HEK293 (cell line): ENCODE measurements at regions of chr17 and their contacts with region 1.

Region 1: DNA sequence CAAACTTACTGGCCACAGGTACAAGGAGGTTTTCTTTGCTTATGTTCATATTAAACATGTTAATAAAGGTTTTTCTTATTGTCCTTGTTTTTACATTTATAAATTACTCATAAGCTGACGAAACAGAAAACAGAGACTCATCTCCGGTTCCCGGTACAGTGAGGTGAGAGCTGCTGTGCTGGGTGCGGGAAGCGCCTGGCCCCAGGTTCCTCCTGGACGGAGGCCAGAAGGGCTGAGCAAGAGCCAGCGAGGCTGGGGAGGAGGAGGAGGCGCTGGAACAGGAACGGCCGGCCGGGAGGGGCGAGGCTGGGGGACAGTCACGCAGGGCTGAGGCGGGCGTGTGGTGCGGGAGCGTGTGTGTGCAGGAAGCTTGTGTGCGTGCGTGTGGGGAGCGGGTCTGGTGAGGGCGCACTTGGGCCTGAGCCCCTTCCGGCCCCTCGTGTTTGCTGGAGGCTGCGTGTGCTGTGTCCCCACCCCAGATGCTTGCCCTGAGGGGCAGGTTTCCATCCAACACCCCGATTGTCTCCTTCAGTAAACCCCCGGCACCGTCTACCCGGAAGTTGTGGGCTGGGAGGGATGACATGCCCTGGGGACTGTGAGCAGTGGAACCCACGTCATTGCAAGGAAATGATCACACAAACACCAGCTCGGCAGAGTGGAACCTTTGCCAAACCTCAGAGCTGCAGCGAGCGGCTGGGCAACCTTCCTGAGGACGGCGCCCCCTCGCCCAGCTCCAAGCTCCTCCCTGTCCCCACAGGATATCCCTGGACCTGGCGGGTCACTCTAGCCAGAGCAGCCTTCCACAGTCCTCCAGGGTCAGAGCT is 19.5 kb downstream of the CD7 start:
- H3K4me3 ChIP-seq: peak overlapping the region; percentile 27
- H3K27ac ChIP-seq: peak overlapping the region; percentile 55; the same call in 1 of the 2 replicates
- H3K4me1 ChIP-seq: peaks cover 13% of the 10 kb centered on the region
- CTCF ChIP-seq: peak; percentile 46

Region 2: DNA sequence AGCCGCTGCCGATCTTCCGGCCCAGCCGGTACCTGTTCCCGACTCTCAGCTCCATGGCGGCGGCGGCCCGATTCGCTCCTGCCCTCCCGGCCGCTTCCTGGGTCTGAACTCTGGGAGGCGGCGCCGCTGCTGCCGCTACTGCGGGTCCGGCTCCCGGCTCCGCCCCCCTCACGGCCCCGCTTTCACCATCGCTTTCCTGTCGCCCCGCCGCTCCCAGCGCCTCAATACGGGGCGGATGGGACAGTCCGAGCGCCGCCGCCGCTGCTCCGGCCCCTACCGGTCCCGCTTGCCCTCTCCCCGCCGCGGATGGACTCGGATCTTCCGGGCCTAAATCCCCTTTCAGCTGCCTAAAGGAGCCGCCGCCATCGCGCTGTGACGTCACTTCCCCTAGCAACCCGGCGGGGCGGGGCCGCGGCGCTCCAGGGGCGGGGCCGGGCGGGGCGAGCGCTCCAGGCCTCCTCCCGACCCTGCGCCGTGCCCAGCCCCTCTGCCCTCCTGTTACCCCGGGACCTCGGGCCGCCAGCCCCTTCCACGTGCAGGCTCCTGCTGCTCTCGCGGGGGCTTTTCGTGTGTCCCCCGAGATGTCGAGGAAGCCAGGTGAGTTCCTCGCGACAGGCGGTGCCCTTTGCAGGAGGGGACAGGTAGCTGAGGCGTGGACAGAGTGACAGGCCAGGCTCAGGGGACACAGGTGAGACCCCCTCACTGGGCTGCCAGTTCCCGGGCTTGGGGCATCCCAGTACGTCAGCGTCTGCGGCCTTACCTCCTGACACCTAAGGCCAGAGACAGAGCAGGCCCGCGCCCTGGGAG is 24.4 kb before region 1 on chr17 and contains the start of gene CSNK1D:
- CTCF ChIA-PET with region 1: interaction called, 4 read pairs
- POLR2A ChIA-PET with region 1: interaction called, 28 read pairs
- H3K4me3 ChIP-seq: peak within 1 kb of the TSS; percentile 87
- H3K27ac ChIP-seq: peak within 1 kb of the TSS; percentile 100
- H3K4me1 ChIP-seq: peaks cover 19% of the 10 kb centered on the region
- CTCF ChIP-seq: peak; percentile 62

Region 3: GRCh38 chr17:82320956-82321927 is 23.3 kb after region 1 on chr17:
- CTCF ChIA-PET with region 1: interaction called, 11 read pairs
- POLR2A ChIA-PET with region 1: interaction called, 3 read pairs
- H3K4me3 ChIP-seq: no peak overlapping the region
- H3K27ac ChIP-seq: no peak overlapping the region
- H3K4me1 ChIP-seq: no peaks in the 10 kb centered on the region; the same call in 1 of the 2 replicates
- CTCF ChIP-seq: peak; percentile 62